Naive thymus-derived CD4-positive, alpha-beta T cell (primary cell): ENCODE measurements at regions of chrX and their contacts with region 1.

Region 1: DNA sequence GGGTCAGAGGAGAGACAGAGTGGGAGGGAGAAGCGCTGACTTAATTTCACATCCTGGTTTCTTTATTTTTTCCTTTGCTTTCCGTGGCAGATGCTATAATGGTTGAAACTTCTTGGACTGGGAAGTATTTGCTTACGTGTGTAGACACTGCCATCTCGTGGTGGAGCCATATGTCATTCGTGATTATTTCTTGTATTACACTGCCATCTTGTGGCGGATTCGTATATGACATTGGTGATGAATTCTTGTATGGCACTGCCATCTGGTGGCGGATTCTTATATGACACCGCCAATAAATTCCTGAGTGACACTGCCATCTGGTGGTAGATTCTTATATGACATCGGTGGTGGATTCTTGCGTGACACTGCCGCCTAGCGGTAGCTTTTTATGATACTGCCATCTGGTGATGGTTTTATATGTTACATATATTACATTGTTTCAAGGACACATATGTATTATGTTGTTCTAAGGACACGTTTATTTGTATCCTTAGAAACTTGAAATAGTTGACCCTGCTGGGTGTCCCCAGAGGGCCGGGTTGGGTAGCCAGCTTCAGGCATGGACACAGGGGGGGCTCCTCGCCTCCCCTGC is 37.3 kb upstream of the CLCN4 start:
- DNase-seq: peak; percentile 51 to 90 (median 77)
- ATAC-seq: peak; percentile 97
- H3K4me3 ChIP-seq: no peak overlapping the region
- H3K4me3 Mint-ChIP-seq: peak overlapping the region in 2 of 10 donors; percentile 44 to 52
- H3K27ac ChIP-seq: no peak overlapping the region
- H3K27ac Mint-ChIP-seq: peak overlapping the region; percentile 3 to 86 (median 54)
- H3K4me1 ChIP-seq: no peaks in the 10 kb centered on the region
- H3K4me1 Mint-ChIP-seq: peaks cover 6 to 25% (median 12%) of the 10 kb centered on the region in 7 donors
- H3K27me3 ChIP-seq: no peaks in the 10 kb centered on the region
- H3K27me3 Mint-ChIP-seq: no peaks in the 10 kb centered on the region

Region 2: GRCh38 chrX:9341291-9342201 is 777.9 kb before region 1 on chrX:
- CTCF ChIA-PET with region 1: no interaction called
- POLR2A ChIA-PET with region 1: no interaction called
- intact Hi-C with region 1: loop called in 1 of 2 experiments (anchors 10 kb)
- DNase-seq: peak in 8 of 9 donors; percentile 46 to 74 (median 64)
- ATAC-seq: peak; percentile 70
- H3K4me3 ChIP-seq: peak overlapping the region; percentile 62
- H3K4me3 Mint-ChIP-seq: peak overlapping the region; percentile 70 to 88 (median 86)
- H3K27ac ChIP-seq: peak overlapping the region; percentile 74
- H3K27ac Mint-ChIP-seq: peak overlapping the region; percentile 94 to 98 (median 96)
- H3K4me1 ChIP-seq: peaks cover 9 to 27% of the 10 kb centered on the region in 2 donors
- H3K4me1 Mint-ChIP-seq: peaks cover 11 to 57% (median 35%) of the 10 kb centered on the region in 7 donors
- H3K27me3 ChIP-seq: no peaks in the 10 kb centered on the region
- H3K27me3 Mint-ChIP-seq: no peaks in the 10 kb centered on the region

Region 3: GRCh38 chrX:9873952-9874351 is 245.5 kb before region 1 on chrX:
- CTCF ChIA-PET with region 1: interaction called, 3 read pairs
- POLR2A ChIA-PET with region 1: no interaction called
- intact Hi-C with region 1: loop called (anchors 1 to 5 kb)
- DNase-seq: peak in 8 of 9 donors; percentile 17 to 58 (median 30)
- ATAC-seq: peak; percentile 69
- H3K4me3 ChIP-seq: no peak overlapping the region
- H3K4me3 Mint-ChIP-seq: peak overlapping the region in 7 of 10 donors; percentile 2 to 70 (median 31)
- H3K27ac ChIP-seq: no peak overlapping the region
- H3K27ac Mint-ChIP-seq: peak overlapping the region in 4 of 9 donors; percentile 13 to 74 (median 51)
- H3K4me1 ChIP-seq: peaks cover 0 to 4% of the 10 kb centered on the region in 2 donors
- H3K4me1 Mint-ChIP-seq: peaks cover 2 to 33% (median 26%) of the 10 kb centered on the region in 7 donors
- H3K27me3 ChIP-seq: no peaks in the 10 kb centered on the region
- H3K27me3 Mint-ChIP-seq: peaks cover 0 to 21% (median 0%) of the 10 kb centered on the region in 5 donors

Region 4: GRCh38 chrX:9988762-9989161 is 130.7 kb before region 1 on chrX:
- CTCF ChIA-PET with region 1: interaction called, 8 read pairs
- POLR2A ChIA-PET with region 1: no interaction called
- intact Hi-C with region 1: loop called (anchors 1 kb)
- DNase-seq: peak in 3 of 9 donors; percentile 16 to 26 (median 20)
- ATAC-seq: no peak
- H3K4me3 ChIP-seq: no peak overlapping the region
- H3K4me3 Mint-ChIP-seq: no peak overlapping the region
- H3K27ac ChIP-seq: no peak overlapping the region
- H3K27ac Mint-ChIP-seq: no peak overlapping the region
- H3K4me1 ChIP-seq: no peaks in the 10 kb centered on the region
- H3K4me1 Mint-ChIP-seq: no peaks in the 10 kb centered on the region
- H3K27me3 ChIP-seq: no peaks in the 10 kb centered on the region
- H3K27me3 Mint-ChIP-seq: peaks cover 0 to 11% (median 0%) of the 10 kb centered on the region in 5 donors

Region 5: DNA sequence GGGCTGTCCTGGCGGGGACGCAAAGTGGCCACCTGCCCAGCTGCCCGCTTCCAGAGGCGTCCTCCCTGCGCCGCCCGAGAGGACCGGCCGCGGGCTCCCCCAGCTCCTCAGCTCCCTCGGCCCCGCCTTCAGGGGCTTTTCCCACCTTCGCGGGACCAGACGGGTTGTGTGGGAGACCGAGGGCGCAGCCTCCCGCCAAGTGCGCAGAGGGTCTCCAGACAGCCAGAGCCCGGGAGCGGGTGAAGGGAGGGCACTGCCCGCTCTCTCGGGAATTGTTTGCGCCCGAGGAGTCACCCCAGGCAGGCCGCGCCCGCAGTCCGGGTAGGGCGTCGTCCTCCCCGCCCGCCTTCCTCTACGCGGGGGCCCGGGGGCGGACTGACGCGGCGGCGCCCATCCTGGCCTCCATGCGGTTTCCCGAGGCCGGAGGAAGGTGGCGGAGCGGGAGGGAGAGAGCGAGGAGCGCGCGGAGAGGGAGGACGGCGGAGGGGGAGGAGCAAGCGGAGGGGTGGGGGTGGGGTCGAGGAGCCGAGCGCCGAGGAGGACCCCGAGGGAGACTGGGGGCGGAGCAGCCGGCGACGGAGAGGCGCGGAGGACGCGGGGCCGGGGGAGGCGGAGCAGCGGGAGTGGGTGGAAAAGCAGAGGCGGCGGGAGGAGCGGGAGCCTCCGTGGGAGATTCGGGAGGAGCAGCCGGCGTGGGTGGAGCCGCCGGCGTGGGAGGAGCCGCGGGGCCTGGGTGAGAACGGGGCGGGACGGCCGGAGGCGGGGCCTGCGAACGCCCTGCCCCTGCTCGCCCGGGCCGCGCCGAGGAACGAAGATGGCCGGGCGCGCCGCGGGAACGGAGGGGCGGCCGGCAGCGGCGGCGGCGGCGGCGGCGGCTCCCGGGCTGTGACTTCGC is 104.8 kb before region 1 on chrX:
- CTCF ChIA-PET with region 1: interaction called, 6 read pairs
- POLR2A ChIA-PET with region 1: no interaction called
- intact Hi-C with region 1: loop called in 1 of 2 experiments (anchors 1 kb)
- DNase-seq: peak; percentile 62 to 84 (median 78)
- ATAC-seq: peak; percentile 97
- H3K4me3 ChIP-seq: peak overlapping the region; percentile 37
- H3K4me3 Mint-ChIP-seq: peak overlapping the region; percentile 50 to 89 (median 64)
- H3K27ac ChIP-seq: peak overlapping the region; percentile 64
- H3K27ac Mint-ChIP-seq: peak overlapping the region in 4 of 9 donors; percentile 45 to 75 (median 58)
- H3K4me1 ChIP-seq: peaks cover 7 to 13% of the 10 kb centered on the region in 2 donors
- H3K4me1 Mint-ChIP-seq: peaks cover 17 to 51% (median 43%) of the 10 kb centered on the region in 7 donors
- H3K27me3 ChIP-seq: no peaks in the 10 kb centered on the region
- H3K27me3 Mint-ChIP-seq: peaks cover 0 to 4% (median 0%) of the 10 kb centered on the region in 5 donors

Region 6: DNA sequence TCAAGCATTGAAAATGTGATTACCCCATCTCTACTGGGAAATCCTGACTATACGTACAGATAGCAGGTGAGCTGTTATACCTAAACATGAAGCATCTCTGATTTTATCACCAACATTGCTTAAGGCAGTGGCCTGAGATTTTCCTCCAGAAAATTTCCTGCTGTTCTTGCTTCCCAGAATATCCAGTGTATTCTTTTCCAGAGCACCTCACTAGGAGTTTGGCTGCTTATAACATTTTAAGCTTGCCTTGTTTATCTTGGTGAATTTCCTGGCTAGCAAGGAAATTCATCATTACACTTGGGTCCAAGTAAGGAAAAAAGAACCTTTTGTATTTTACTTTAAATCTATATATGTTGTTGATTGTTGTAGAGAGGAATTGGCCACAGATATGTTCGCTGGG is 35.7 kb before region 1 on chrX:
- CTCF ChIA-PET with region 1: interaction called, 9 read pairs
- POLR2A ChIA-PET with region 1: interaction called, 4 read pairs
- intact Hi-C with region 1: loop called in 1 of 2 experiments (anchors 2 kb)
- DNase-seq: no peak
- ATAC-seq: no peak
- H3K4me3 ChIP-seq: no peak overlapping the region
- H3K4me3 Mint-ChIP-seq: peak overlapping the region in 5 of 10 donors; percentile 1 to 54 (median 25)
- H3K27ac ChIP-seq: no peak overlapping the region
- H3K27ac Mint-ChIP-seq: peak overlapping the region in 5 of 9 donors; percentile 20 to 94 (median 58)
- H3K4me1 ChIP-seq: peaks cover 26 to 28% of the 10 kb centered on the region in 2 donors
- H3K4me1 Mint-ChIP-seq: peaks cover 8 to 45% (median 41%) of the 10 kb centered on the region in 7 donors
- H3K27me3 ChIP-seq: no peaks in the 10 kb centered on the region
- H3K27me3 Mint-ChIP-seq: no peaks in the 10 kb centered on the region

Region 7: GRCh38 chrX:10636337-10636736 is 516.8 kb after region 1 on chrX:
- CTCF ChIA-PET with region 1: no interaction called
- POLR2A ChIA-PET with region 1: no interaction called
- intact Hi-C with region 1: no loop called
- DNase-seq: no peak
- ATAC-seq: no peak
- H3K4me3 ChIP-seq: no peak overlapping the region
- H3K4me3 Mint-ChIP-seq: no peak overlapping the region
- H3K27ac ChIP-seq: no peak overlapping the region
- H3K27ac Mint-ChIP-seq: no peak overlapping the region
- H3K4me1 ChIP-seq: no peaks in the 10 kb centered on the region
- H3K4me1 Mint-ChIP-seq: no peaks in the 10 kb centered on the region
- H3K27me3 ChIP-seq: no peaks in the 10 kb centered on the region
- H3K27me3 Mint-ChIP-seq: peaks cover 0 to 3% (median 0%) of the 10 kb centered on the region in 5 donors

Region 8: GRCh38 chrX:11111038-11111851 is 991.8 kb after region 1 on chrX and contains the start of gene HCCS:
- CTCF ChIA-PET with region 1: no interaction called
- POLR2A ChIA-PET with region 1: no interaction called
- intact Hi-C with region 1: loop called in 1 of 2 experiments (anchors 5 kb)
- DNase-seq: peak; percentile 59 to 86 (median 81)
- ATAC-seq: peak; percentile 94
- H3K4me3 ChIP-seq: peak within 1 kb of the TSS; percentile 73
- H3K4me3 Mint-ChIP-seq: peak within 1 kb of the TSS in 4 of 10 donors; percentile 95 to 98 (median 96)
- H3K27ac ChIP-seq: peak within 1 kb of the TSS; percentile 87
- H3K27ac Mint-ChIP-seq: peak within 1 kb of the TSS in 7 of 9 donors; percentile 90 to 99 (median 96)
- H3K4me1 ChIP-seq: no peaks in the 10 kb centered on the region
- H3K4me1 Mint-ChIP-seq: peaks cover 7 to 33% (median 24%) of the 10 kb centered on the region in 7 donors
- H3K27me3 ChIP-seq: no peaks in the 10 kb centered on the region
- H3K27me3 Mint-ChIP-seq: no peaks in the 10 kb centered on the region
- total RNA-seq, gene HCCS: 5.6 to 19.9 (median 13.3) TPM

Region 9: DNA sequence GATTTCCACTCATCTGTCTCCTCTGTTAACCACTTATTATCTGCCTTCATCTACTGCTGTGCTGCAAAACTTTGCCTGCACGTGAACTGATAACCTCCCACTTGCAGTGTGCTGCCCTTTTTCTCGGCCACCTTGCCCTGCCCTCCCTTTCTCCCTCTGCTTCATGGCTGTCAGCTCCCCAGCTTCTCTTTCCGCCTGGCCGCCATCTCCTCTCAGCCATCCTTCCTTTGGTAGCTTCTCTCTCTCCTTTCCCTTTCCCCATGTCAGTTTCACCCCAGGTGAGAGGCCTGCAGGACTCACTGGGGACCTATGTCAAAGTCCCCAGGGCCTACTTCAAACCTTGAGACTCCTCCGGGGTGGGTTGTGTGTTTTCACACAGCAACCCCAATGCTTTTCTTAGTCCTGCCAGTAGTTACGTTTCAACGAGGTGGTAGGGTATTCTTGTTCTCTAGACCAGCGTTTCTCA is 1645.1 kb after region 1 on chrX:
- CTCF ChIA-PET with region 1: no interaction called
- POLR2A ChIA-PET with region 1: no interaction called
- intact Hi-C with region 1: no loop called
- DNase-seq: no peak
- ATAC-seq: no peak
- H3K4me3 ChIP-seq: peak overlapping the region; percentile 63
- H3K4me3 Mint-ChIP-seq: peak overlapping the region; percentile 81 to 100 (median 88)
- H3K27ac ChIP-seq: peak overlapping the region; percentile 93
- H3K27ac Mint-ChIP-seq: peak overlapping the region; percentile 89 to 100 (median 96)
- H3K4me1 ChIP-seq: peaks cover 25 to 42% of the 10 kb centered on the region in 2 donors
- H3K4me1 Mint-ChIP-seq: peaks cover 18 to 86% (median 60%) of the 10 kb centered on the region in 7 donors
- H3K27me3 ChIP-seq: no peaks in the 10 kb centered on the region
- H3K27me3 Mint-ChIP-seq: no peaks in the 10 kb centered on the region